ENCODE measurements at regions of chr6 and their contacts with region 1.

Region 1: GRCh38 chr6:69138893-69139494 is 503.9 kb downstream of the ADGRB3 start:
- DNase-seq: peak; percentile 28
- ATAC-seq: peak; percentile 71 to 88

Region 2: GRCh38 chr6:67563671-67564070 is 1575.3 kb before region 1 on chr6:
- intact Hi-C with region 1: no loop called
- DNase-seq: no peak
- ATAC-seq: no peak

Region 3: GRCh38 chr6:68990317-68990716 is 148.7 kb before region 1 on chr6:
- intact Hi-C with region 1: loop called in 1 of 2 experiments (anchors 5 kb)
- DNase-seq: no peak
- ATAC-seq: no peak